IMR-90 (cell line): ENCODE measurements at regions of chr5 and their contacts with region 1.

Region 1: DNA sequence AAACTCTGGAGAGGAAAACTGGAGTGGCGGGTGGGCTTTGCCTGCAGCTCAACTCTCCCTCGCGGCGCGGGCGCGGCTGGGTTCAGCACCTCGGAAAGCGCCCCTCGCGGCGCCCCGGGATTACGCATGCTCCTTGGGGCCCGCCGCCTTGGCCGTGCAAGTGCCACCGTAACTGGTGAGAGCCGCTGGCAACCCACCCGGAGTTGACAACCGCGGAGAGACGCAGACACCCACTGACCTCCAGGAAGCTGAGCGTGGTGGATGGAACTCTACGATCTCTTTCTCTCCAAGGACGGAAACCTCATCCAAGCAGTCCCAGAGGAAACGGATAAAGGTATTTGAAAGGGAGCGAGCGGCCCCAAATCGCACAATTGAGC is 194 bp upstream of the RXFP3 start:
- DNase-seq: peak; percentile 54
- ATAC-seq: peak; percentile 90
- H3K4me3 ChIP-seq: peak overlapping the region; percentile 56
- H3K27ac ChIP-seq: no peak overlapping the region
- H3K4me1 ChIP-seq: no peaks in the 10 kb centered on the region
- H3K27me3 ChIP-seq: peaks cover 42% of the 10 kb centered on the region
- CTCF ChIP-seq: no peak
- POLR2A ChIP-seq: no peak
- RAD21 ChIP-seq: 0 out of 2 replicates have a peak, but pooled peaks have one; percentile 15

Region 2: DNA sequence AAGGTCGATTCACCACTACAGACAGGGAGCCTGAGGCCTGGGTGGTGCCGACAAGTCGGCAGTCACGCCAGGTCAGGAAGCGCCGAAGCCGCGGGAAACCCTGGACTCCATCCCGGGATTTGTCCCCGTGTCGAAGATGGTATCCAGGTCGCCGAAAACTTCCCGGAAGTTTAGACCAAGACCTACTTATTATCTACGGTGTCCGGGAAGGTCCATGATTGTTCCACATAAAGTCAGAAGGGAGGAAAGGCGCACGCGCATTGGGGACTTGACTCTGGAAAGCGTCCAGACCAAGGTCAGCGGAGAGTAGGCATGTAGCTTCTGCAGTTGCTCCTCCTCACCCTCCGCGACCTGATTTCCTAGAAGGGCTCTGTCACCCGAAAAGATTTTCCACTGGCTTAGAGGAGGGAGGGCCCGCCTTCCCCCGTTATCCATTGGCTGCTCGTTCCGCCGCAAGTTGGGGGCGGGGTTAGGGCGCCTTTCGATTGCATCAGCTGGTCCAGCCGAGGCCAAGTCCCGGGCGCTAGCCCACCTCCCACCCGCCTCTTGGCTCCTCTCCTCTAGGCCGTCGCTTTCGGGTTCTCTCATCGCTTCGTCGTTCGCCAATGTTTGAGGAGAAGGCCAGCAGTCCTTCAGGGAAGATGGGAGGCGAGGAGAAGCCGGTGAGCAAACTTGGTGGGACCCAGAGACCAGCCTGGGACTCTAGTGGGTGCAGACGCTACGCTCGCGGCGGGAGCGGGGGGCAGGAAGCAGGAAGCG is 495.3 kb before region 1 on chr5 and contains the start of gene TARS1:
- CTCF ChIA-PET with region 1: no interaction called
- POLR2A ChIA-PET with region 1: no interaction called
- dilution Hi-C with region 1: no loop called
- in situ Hi-C with region 1: no loop called
- intact Hi-C with region 1: loop called (anchors 1 kb)
- DNase-seq: peak; percentile 100
- ATAC-seq: peak; percentile 94
- H3K4me3 ChIP-seq: peak within 1 kb of the TSS; percentile 68
- H3K27ac ChIP-seq: peak within 1 kb of the TSS; percentile 97
- H3K4me1 ChIP-seq: peaks cover 2% of the 10 kb centered on the region; the same call in 1 of the 2 replicates
- H3K27me3 ChIP-seq: no peaks in the 10 kb centered on the region
- CTCF ChIP-seq: no peak
- POLR2A ChIP-seq: peak; percentile 91
- RAD21 ChIP-seq: no peak
- total RNA-seq, gene TARS1: 175 and 219 TPM in 2 replicates

Region 3: GRCh38 chr5:33470544-33470943 is 465.4 kb before region 1 on chr5:
- CTCF ChIA-PET with region 1: interaction called, 3 read pairs
- POLR2A ChIA-PET with region 1: no interaction called
- dilution Hi-C with region 1: no loop called
- in situ Hi-C with region 1: loop called (anchors 5 kb)
- intact Hi-C with region 1: loop called (anchors 5 kb)
- DNase-seq: peak; percentile 60
- ATAC-seq: peak; percentile 68
- H3K4me3 ChIP-seq: no peak overlapping the region
- H3K27ac ChIP-seq: no peak overlapping the region
- H3K4me1 ChIP-seq: no peaks in the 10 kb centered on the region
- H3K27me3 ChIP-seq: no peaks in the 10 kb centered on the region
- CTCF ChIP-seq: peak; percentile 46
- POLR2A ChIP-seq: no peak
- RAD21 ChIP-seq: peak; percentile 60

Region 4: GRCh38 chr5:33611877-33612276 is 324.1 kb before region 1 on chr5:
- CTCF ChIA-PET with region 1: no interaction called
- POLR2A ChIA-PET with region 1: no interaction called
- dilution Hi-C with region 1: no loop called
- in situ Hi-C with region 1: no loop called
- intact Hi-C with region 1: loop called (anchors 10 kb)
- DNase-seq: peak; percentile 85
- ATAC-seq: peak; percentile 91
- H3K4me3 ChIP-seq: no peak overlapping the region
- H3K27ac ChIP-seq: no peak overlapping the region
- H3K4me1 ChIP-seq: peaks cover 8% of the 10 kb centered on the region
- H3K27me3 ChIP-seq: no peaks in the 10 kb centered on the region
- CTCF ChIP-seq: no peak
- POLR2A ChIP-seq: no peak
- RAD21 ChIP-seq: no peak

Region 5: GRCh38 chr5:33806738-33807442 is 129.1 kb before region 1 on chr5:
- CTCF ChIA-PET with region 1: no interaction called
- POLR2A ChIA-PET with region 1: no interaction called
- dilution Hi-C with region 1: no loop called
- in situ Hi-C with region 1: no loop called
- intact Hi-C with region 1: loop called (anchors 5 kb)
- DNase-seq: peak; percentile 87
- ATAC-seq: peak; percentile 80
- H3K4me3 ChIP-seq: peak overlapping the region; percentile 19; the same call in 1 of the 2 replicates
- H3K27ac ChIP-seq: peak overlapping the region; percentile 92
- H3K4me1 ChIP-seq: peaks cover 21% of the 10 kb centered on the region
- H3K27me3 ChIP-seq: no peaks in the 10 kb centered on the region
- CTCF ChIP-seq: no peak
- POLR2A ChIP-seq: no peak
- RAD21 ChIP-seq: no peak

Region 6: DNA sequence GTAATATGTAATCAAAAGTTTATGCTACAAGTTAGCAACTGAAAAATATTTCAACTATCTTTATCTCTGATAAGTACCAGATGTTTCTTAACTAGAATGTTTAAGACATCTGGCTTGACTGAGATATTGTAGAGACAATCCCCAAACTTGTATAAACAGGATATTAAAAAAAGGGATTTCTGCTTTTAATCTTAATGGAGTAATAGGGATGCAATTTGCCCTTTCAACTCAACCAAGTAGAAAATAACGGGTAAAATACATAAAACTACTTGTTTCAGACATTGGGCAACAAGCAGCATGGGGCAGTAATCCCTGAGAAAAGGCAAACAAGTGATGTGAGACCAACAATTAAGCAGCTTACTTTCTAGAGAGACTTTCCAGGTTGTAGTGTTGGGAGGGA is 34.8 kb before region 1 on chr5:
- CTCF ChIA-PET with region 1: no interaction called
- POLR2A ChIA-PET with region 1: no interaction called
- dilution Hi-C with region 1: no loop called
- in situ Hi-C with region 1: no loop called
- intact Hi-C with region 1: no loop called
- DNase-seq: peak; percentile 79
- ATAC-seq: peak; percentile 77
- H3K4me3 ChIP-seq: no peak overlapping the region
- H3K27ac ChIP-seq: peak overlapping the region; percentile 78; the same call in 1 of the 2 replicates
- H3K4me1 ChIP-seq: peaks cover 3% of the 10 kb centered on the region; the same call in 1 of the 2 replicates
- H3K27me3 ChIP-seq: no peaks in the 10 kb centered on the region
- CTCF ChIP-seq: no peak
- POLR2A ChIP-seq: no peak
- RAD21 ChIP-seq: no peak